ENCODE measurements at regions of chr1 and their contacts with region 1.

Region 1: DNA sequence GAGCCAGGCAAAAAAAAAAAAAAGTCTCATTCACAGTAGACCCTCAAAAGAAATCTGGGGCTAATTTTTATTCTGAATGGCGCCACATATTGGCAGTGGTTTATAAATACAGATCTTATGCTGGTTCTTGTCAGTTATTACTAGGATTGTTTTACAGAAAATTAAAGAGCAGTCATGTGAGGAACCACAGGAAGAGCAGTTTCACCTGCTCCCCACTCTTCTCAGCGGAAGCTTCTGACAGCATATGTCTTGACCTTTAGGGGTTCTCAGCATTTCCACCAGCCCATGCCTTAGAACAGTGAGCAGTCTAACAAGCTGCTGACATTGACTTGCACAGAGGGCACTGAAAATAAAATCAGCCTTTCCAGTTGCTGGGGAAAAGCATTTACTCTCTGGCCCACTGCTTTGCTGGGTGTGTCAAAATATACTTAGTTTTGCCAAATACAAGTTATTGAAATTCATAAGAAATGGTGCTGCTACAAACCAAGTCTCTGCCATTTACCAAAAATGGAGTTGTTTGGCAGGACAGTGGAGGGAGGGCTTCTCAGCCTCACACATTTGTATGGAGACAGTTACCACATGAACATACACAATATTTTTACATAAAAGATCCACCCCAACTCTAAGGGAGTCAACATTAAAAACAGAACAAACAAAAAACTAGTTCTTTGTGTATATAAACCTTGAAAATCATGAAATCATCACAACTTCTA is 144.2 kb downstream of the SYT2 start:
- DNase-seq: peak; percentile 71
- ATAC-seq: peak; percentile 90
- H3K4me3 ChIP-seq: no peak overlapping the region
- H3K27ac ChIP-seq: no peak overlapping the region
- H3K4me1 ChIP-seq: peaks cover 33% of the 10 kb centered on the region
- H3K27me3 ChIP-seq: no peaks in the 10 kb centered on the region
- CTCF ChIP-seq: peak in 2 of 3 experiments; percentile 31 to 32; a peak in 2 of 6 replicates
- EP300 ChIP-seq: no peak
- POLR2A ChIP-seq: no peak
- RAD21 ChIP-seq: peak; percentile 22; the same call in 1 of the 2 replicates

Region 2: DNA sequence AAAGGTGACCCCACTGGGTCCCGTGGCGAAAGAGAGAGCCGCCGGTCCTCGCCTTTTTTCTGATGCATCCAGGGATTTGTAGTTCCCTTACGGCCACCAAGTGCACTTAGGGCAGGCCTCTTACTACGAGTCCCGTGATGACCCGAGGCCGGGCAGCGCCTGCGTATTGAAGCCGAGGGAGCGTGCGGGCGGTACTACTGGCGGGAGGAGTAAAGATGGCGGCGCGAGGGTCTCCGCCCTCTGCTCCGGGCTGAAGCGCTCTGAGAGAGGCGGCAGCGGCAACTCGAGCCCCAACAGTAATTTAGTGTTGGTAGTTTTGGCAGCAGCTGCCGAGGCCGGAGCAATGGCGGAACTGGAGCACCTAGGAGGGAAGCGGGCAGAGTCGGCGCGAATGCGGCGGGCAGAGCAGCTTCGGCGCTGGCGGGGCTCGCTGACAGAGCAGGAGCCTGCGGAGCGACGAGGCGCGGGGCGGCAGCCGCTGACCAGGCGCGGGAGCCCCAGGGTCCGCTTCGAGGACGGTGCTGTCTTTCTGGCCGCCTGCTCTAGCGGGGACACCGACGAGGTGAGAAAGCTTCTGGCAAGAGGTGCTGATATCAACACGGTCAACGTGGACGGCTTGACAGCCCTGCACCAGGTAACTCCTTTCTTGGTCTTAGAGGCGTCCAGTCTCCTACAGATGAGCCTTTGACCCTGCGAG is 217.4 kb before region 1 on chr1 and contains the start of gene PPP1R12B:
- CTCF ChIA-PET with region 1: interaction called, 21 read pairs
- POLR2A ChIA-PET with region 1: no interaction called
- RAD21 ChIA-PET with region 1: interaction called, 5 read pairs
- SMC1A ChIA-PET with region 1: interaction called, 4 read pairs
- in situ Hi-C with region 1: no loop called
- intact Hi-C with region 1: loop called (anchors 5 kb)
- DNase-seq: peak; percentile 94
- ATAC-seq: peak; percentile 99
- H3K4me3 ChIP-seq: peak within 1 kb of the TSS; percentile 88
- H3K27ac ChIP-seq: peak within 1 kb of the TSS; percentile 40; the same call in 1 of the 2 replicates
- H3K4me1 ChIP-seq: no peaks in the 10 kb centered on the region; the same call in 1 of the 2 replicates
- H3K27me3 ChIP-seq: no peaks in the 10 kb centered on the region
- CTCF ChIP-seq: no peak
- EP300 ChIP-seq: no peak
- POLR2A ChIP-seq: peak; percentile 77
- RAD21 ChIP-seq: no peak
- polyA plus RNA-seq, gene PPP1R12B: 0.29 to 0.61 TPM

Region 3: GRCh38 chr1:202501281-202501680 is 64.8 kb before region 1 on chr1:
- CTCF ChIA-PET with region 1: interaction called, 189 read pairs
- POLR2A ChIA-PET with region 1: interaction called, 3 read pairs
- RAD21 ChIA-PET with region 1: interaction called, 20 read pairs
- SMC1A ChIA-PET with region 1: interaction called, 173 read pairs
- in situ Hi-C with region 1: no loop called
- intact Hi-C with region 1: loop called (anchors 1 kb)
- DNase-seq: no peak
- ATAC-seq: peak; percentile 76
- H3K4me3 ChIP-seq: no peak overlapping the region
- H3K27ac ChIP-seq: no peak overlapping the region
- H3K4me1 ChIP-seq: no peaks in the 10 kb centered on the region
- H3K27me3 ChIP-seq: no peaks in the 10 kb centered on the region
- CTCF ChIP-seq: peak; percentile 26 to 50 (median 34); a peak in 5 of 6 replicates
- EP300 ChIP-seq: no peak
- POLR2A ChIP-seq: no peak
- RAD21 ChIP-seq: peak; percentile 77

Region 4: DNA sequence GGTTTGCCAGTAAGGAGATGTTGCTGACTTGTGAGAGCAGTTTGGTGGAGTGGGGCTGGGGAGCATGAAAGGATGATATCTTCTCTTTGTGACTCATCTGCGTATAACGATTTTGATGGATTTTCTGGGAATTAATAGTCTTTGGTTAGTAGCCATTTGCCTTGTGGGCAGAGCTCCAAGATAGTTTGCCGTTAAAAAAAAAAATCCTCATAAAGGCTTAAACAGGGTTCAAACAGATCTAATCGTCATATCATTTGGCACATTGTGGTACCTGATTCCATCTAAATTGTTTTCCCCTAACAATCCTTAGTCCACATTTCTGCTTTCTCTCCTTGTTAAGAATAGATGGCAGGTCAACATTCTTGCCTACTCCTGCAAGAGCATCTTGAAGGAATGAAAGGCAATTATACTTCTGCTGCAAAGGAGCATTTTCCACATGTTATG is 49.6 kb before region 1 on chr1:
- CTCF ChIA-PET with region 1: interaction called, 8 read pairs
- POLR2A ChIA-PET with region 1: no interaction called
- RAD21 ChIA-PET with region 1: interaction called, 5 read pairs
- SMC1A ChIA-PET with region 1: interaction called, 14 read pairs
- in situ Hi-C with region 1: loop called (anchors 5 kb)
- intact Hi-C with region 1: no loop called
- DNase-seq: no peak
- ATAC-seq: no peak
- H3K4me3 ChIP-seq: no peak overlapping the region
- H3K27ac ChIP-seq: no peak overlapping the region
- H3K4me1 ChIP-seq: peaks cover 9% of the 10 kb centered on the region
- H3K27me3 ChIP-seq: no peaks in the 10 kb centered on the region
- CTCF ChIP-seq: no peak
- EP300 ChIP-seq: no peak
- POLR2A ChIP-seq: no peak
- RAD21 ChIP-seq: no peak

Region 5: DNA sequence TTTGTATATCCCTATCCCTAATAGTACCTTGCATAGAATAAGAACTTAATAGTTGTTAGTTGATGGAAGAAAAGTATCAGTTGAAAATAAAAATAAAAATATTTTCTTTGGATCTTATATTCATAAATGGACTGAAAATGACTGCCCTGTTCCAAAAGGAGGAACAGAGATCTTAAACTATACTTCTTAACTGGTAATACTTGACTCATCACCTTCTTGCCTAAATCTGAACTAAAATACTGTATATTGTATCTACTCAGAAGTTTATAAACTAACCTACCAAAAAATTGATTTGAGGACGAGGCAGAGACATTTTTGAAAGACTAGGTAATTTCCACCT is 34.6 kb before region 1 on chr1:
- CTCF ChIA-PET with region 1: interaction called, 5 read pairs
- POLR2A ChIA-PET with region 1: interaction called, 3 read pairs
- RAD21 ChIA-PET with region 1: interaction called, 4 read pairs
- SMC1A ChIA-PET with region 1: interaction called, 6 read pairs
- in situ Hi-C with region 1: no loop called
- intact Hi-C with region 1: loop called (anchors 2 kb)
- DNase-seq: no peak
- ATAC-seq: peak; percentile 75
- H3K4me3 ChIP-seq: no peak overlapping the region
- H3K27ac ChIP-seq: peak overlapping the region; percentile 39; the same call in 1 of the 2 replicates
- H3K4me1 ChIP-seq: no peaks in the 10 kb centered on the region
- H3K27me3 ChIP-seq: no peaks in the 10 kb centered on the region
- CTCF ChIP-seq: no peak
- EP300 ChIP-seq: no peak
- POLR2A ChIP-seq: no peak
- RAD21 ChIP-seq: no peak

Region 6: DNA sequence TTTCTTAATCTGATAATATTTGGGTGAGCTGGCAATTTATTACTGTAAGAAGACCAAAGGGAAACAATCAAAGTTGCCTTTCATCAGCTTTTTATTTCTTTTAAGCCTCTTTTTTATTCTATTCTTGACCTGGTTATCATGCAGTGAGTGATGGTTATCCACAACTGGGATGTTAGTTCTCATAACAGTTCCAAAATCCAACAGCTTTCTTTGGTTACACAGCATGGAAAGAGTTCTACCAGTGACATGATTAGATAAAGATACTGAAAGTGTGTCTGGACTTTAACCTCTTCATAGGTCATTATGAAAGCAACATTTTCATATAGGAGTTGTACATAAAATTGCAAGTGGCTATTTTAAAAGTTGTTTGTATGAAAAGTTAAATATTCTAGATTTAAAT is 18.8 kb before region 1 on chr1:
- CTCF ChIA-PET with region 1: interaction called, 14 read pairs
- POLR2A ChIA-PET with region 1: interaction called, 6 read pairs
- RAD21 ChIA-PET with region 1: interaction called, 8 read pairs
- SMC1A ChIA-PET with region 1: interaction called, 38 read pairs
- in situ Hi-C with region 1: no loop called
- intact Hi-C with region 1: loop called (anchors 2 kb)
- DNase-seq: no peak
- ATAC-seq: peak; percentile 80
- H3K4me3 ChIP-seq: no peak overlapping the region
- H3K27ac ChIP-seq: no peak overlapping the region
- H3K4me1 ChIP-seq: peaks cover 7% of the 10 kb centered on the region; the same call in 1 of the 2 replicates
- H3K27me3 ChIP-seq: no peaks in the 10 kb centered on the region
- CTCF ChIP-seq: no peak
- EP300 ChIP-seq: no peak
- POLR2A ChIP-seq: no peak
- RAD21 ChIP-seq: no peak

Region 7: GRCh38 chr1:202553560-202554038 is 12.4 kb before region 1 on chr1:
- CTCF ChIA-PET with region 1: interaction called, 6 read pairs
- POLR2A ChIA-PET with region 1: interaction called, 8 read pairs
- RAD21 ChIA-PET with region 1: interaction called, 11 read pairs
- SMC1A ChIA-PET with region 1: interaction called, 38 read pairs
- in situ Hi-C with region 1: no loop called
- intact Hi-C with region 1: no loop called
- DNase-seq: peak; percentile 37
- ATAC-seq: peak; percentile 91
- H3K4me3 ChIP-seq: no peak overlapping the region
- H3K27ac ChIP-seq: no peak overlapping the region
- H3K4me1 ChIP-seq: no peaks in the 10 kb centered on the region
- H3K27me3 ChIP-seq: no peaks in the 10 kb centered on the region
- CTCF ChIP-seq: no peak
- EP300 ChIP-seq: no peak
- POLR2A ChIP-seq: no peak
- RAD21 ChIP-seq: no peak

Region 8: DNA sequence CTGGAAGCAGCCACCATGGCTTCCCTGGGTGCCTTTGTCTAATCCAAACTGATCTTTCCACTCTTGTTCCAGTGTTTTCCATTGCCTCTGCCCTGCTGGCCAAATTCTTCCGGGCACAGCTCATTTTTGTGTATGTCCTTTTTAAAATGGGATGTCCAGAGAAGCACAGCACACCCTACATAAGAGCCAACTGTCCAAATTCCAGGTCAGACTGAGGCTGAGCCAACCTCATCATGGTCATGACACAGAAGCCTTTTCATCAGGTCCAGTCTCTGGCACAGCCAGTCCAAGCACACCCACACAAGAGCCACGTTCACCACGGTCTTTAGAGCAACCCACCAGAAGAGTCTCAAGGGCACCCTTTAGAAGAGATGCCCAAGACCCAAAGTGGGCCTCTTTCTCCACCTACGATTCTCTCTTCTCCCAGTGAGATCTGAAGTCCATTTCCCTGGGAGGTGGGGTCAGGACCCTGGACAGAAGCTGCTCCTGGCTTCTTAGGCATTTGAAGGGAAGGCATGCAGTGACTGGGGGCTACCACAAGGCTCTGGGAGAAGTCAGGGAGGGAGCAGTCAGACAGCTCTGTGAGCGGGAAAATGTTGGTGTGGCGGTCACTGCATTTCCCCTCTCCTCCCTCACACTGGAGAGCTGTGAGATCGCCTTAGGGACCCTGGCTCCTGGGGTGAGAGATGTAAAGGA is 91.1 kb after region 1 on chr1:
- CTCF ChIA-PET with region 1: no interaction called
- POLR2A ChIA-PET with region 1: no interaction called
- RAD21 ChIA-PET with region 1: no interaction called
- SMC1A ChIA-PET with region 1: no interaction called
- in situ Hi-C with region 1: no loop called
- intact Hi-C with region 1: no loop called
- DNase-seq: no peak
- ATAC-seq: no peak; the same call in 2 of the 3 replicates
- H3K4me3 ChIP-seq: no peak overlapping the region
- H3K27ac ChIP-seq: no peak overlapping the region
- H3K4me1 ChIP-seq: no peaks in the 10 kb centered on the region
- H3K27me3 ChIP-seq: peaks cover 0 to 5% of the 10 kb centered on the region in 2 experiments; a peak in 1 of 4 replicates
- CTCF ChIP-seq: no peak
- EP300 ChIP-seq: no peak
- POLR2A ChIP-seq: no peak
- RAD21 ChIP-seq: no peak